ENCODE measurements at regions of chr1 and their contacts with region 1.

Region 1: GRCh38 chr1:167663002-167663772 is 33.2 kb downstream of the RCSD1 start:
- DNase-seq: peak; percentile 51 to 79
- ATAC-seq: peak; percentile 81 to 87 (median 82)
- H3K4me3 ChIP-seq: no peak overlapping the region
- H3K27ac ChIP-seq: peak overlapping the region; percentile 93
- H3K4me1 ChIP-seq: peaks cover 90% of the 10 kb centered on the region
- H3K27me3 ChIP-seq: no peaks in the 10 kb centered on the region
- CTCF ChIP-seq: no peak

Region 2: DNA sequence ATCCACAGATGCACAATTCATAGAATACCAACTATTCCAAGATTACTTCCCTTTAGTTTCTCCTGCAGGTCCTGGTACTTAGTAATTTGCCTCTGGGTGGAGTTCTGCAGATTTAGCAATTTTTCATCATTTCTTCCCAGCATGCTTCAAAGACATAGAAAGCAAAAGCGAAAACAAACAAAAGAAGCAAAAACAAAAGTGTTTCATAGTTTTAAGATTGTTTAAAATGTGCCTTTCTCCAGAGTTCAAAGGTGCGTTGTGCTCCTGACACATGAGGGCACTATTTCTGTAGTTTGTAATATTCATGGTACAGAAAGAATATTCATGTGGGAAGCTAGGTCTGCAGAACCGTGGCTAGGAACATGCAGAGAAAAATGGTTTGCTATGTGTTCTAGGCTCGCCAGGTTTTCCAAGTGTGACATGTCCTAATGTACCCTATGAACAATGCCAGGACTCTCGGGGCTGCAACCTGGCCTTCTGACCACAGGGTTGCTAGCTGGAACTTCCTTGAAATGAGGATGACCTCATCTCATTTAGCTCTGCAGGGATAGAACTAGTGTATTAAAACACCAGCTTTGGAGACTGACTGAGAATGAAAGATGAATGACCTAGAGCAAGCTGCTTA is 63.1 kb before region 1 on chr1:
- intact Hi-C with region 1: loop called in 1 of 2 experiments (anchors 2 kb)
- DNase-seq: peak; percentile 31 to 59
- ATAC-seq: peak; percentile 85 to 94 (median 90)
- H3K4me3 ChIP-seq: no peak overlapping the region
- H3K27ac ChIP-seq: peak overlapping the region; percentile 51
- H3K4me1 ChIP-seq: peaks cover 24% of the 10 kb centered on the region
- H3K27me3 ChIP-seq: no peaks in the 10 kb centered on the region
- CTCF ChIP-seq: peak; percentile 62